ENCODE measurements at regions of chr2 and their contacts with region 1.

Region 1: DNA sequence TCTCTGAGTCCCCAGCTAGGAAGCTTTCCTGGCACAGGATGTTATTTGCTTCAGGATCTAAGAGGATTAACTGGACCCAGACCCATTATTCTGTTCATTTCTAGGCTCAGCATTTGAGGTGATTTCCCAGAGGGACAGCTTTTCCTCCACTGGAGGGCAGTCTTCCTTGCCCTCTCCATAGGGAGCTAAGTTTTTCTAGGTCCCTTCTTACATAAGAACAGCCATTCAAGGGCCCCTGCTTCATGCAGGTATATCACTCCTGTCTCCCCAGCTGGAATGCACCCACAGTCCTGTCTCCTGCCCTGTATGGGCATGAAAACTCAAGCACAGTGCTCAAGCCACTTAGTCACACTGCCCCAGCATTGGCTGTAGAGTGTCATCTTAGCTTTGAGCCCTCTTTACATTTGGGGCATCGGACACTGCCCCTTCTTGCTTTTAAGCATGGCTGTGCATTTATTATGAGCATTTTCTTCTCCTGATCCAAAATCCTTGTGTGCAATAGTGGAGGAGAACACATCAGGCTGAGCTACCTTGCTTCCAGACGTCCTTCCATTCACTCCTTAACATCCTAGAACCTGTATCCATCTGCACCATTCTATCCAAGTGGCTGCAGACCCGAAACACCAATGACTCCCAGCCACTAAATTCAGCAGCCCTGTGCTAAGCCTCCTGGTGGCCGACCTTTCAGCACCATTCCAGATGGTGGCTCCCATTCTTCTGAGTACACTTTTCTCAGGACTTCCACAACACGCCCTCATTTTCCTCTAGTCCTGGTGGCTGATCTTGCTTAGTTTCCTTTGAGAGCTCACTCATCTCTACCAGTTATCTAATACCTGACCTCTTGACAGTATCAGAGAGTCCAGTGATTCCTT is 80.0 kb downstream of the COPS8 start:
- DNase-seq: no peak
- ATAC-seq: peak in 1 of 4 donors; percentile 60
- H3K4me3 ChIP-seq: no peak overlapping the region
- H3K27ac ChIP-seq: no peak overlapping the region
- H3K4me1 ChIP-seq: no peaks in the 10 kb centered on the region
- H3K27me3 ChIP-seq: no peaks in the 10 kb centered on the region
- CTCF ChIP-seq: peak in 1 of 4 donors; percentile 16

Region 2: GRCh38 chr2:237322564-237322963 is 156.9 kb after region 1 on chr2:
- intact Hi-C with region 1: loop called in 1 of 3 experiments (anchors 5 kb)
- DNase-seq: peak in 3 of 6 donors; percentile 42 to 67 (median 49)
- ATAC-seq: peak; percentile 58 to 85 (median 82)
- H3K4me3 ChIP-seq: no peak overlapping the region
- H3K27ac ChIP-seq: no peak overlapping the region
- H3K4me1 ChIP-seq: no peaks in the 10 kb centered on the region
- H3K27me3 ChIP-seq: no peaks in the 10 kb centered on the region
- CTCF ChIP-seq: peak; percentile 26 to 50 (median 40)

Measured in pancreas (tissue), 10 donors.